ENCODE measurements at regions of chrX and their contacts with region 1.

Region 1: GRCh38 chrX:57918750-57919436 is 8.6 kb upstream of the ZXDA start:
- DNase-seq: peak in 2 of 9 experiments; percentile 39 to 50
- ATAC-seq: no peak
- H3K4me3 ChIP-seq: no peak overlapping the region
- H3K4me3 Mint-ChIP-seq: no peak overlapping the region
- H3K27ac ChIP-seq: no peak overlapping the region
- H3K27ac Mint-ChIP-seq: no peak overlapping the region
- H3K4me1 ChIP-seq: no peaks in the 10 kb centered on the region
- H3K4me1 Mint-ChIP-seq: no peaks in the 10 kb centered on the region
- H3K27me3 ChIP-seq: no peaks in the 10 kb centered on the region
- H3K27me3 Mint-ChIP-seq: no peaks in the 10 kb centered on the region
- CTCF ChIP-seq: peak; percentile 37

Region 2: GRCh38 chrX:56764153-56764974 is 1154.5 kb before region 1 on chrX:
- CTCF ChIA-PET with region 1: interaction called, 4 read pairs
- POLR2A ChIA-PET with region 1: no interaction called
- intact Hi-C with region 1: loop called in 1 of 2 experiments (anchors 5 kb)
- DNase-seq: peak; percentile 37 to 90 (median 62)
- ATAC-seq: peak; percentile 69
- H3K4me3 ChIP-seq: peak overlapping the region in 1 of 2 experiments; percentile 35
- H3K4me3 Mint-ChIP-seq: peak overlapping the region; percentile 70
- H3K27ac ChIP-seq: peak overlapping the region; percentile 37 to 69
- H3K27ac Mint-ChIP-seq: peak overlapping the region; percentile 91
- H3K4me1 ChIP-seq: peaks cover 40% of the 10 kb centered on the region
- H3K4me1 Mint-ChIP-seq: peaks cover 42% of the 10 kb centered on the region
- H3K27me3 ChIP-seq: no peaks in the 10 kb centered on the region
- H3K27me3 Mint-ChIP-seq: no peaks in the 10 kb centered on the region
- CTCF ChIP-seq: peak; percentile 47

Region 3: DNA sequence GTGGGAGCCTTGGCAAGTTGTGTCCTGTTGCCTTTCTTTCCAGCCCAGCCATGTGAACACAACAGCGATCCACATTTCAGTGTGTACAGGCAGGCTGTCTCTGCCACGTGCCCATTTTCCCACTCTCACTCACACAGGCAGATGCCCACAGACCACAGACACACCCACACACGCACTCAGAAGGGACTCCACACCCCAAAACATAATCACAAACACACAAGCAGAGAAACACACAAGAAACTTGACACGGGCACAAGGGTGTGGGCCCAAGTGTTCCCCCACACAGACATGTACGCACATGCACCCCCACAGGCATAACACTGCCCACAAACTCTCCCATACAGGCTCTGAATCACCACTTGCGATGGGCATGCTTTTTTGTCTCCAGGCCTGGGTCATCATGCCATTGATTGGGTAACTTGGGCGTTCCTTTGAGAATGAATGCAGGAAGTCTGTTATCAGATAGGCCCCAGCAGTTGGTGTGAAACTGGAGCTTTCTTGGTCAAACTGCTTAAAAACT is 1105.5 kb before region 1 on chrX:
- CTCF ChIA-PET with region 1: no interaction called
- POLR2A ChIA-PET with region 1: no interaction called
- intact Hi-C with region 1: loop called (anchors 5 kb)
- DNase-seq: peak in 8 of 9 experiments; percentile 27 to 88 (median 59)
- ATAC-seq: peak; percentile 79
- H3K4me3 ChIP-seq: peak overlapping the region; percentile 0 to 12
- H3K4me3 Mint-ChIP-seq: peak overlapping the region; percentile 78
- H3K27ac ChIP-seq: peak overlapping the region; percentile 57 to 90
- H3K27ac Mint-ChIP-seq: peak overlapping the region; percentile 98
- H3K4me1 ChIP-seq: peaks cover 26% of the 10 kb centered on the region
- H3K4me1 Mint-ChIP-seq: peaks cover 43% of the 10 kb centered on the region
- H3K27me3 ChIP-seq: no peaks in the 10 kb centered on the region
- H3K27me3 Mint-ChIP-seq: no peaks in the 10 kb centered on the region
- CTCF ChIP-seq: no peak

Region 4: DNA sequence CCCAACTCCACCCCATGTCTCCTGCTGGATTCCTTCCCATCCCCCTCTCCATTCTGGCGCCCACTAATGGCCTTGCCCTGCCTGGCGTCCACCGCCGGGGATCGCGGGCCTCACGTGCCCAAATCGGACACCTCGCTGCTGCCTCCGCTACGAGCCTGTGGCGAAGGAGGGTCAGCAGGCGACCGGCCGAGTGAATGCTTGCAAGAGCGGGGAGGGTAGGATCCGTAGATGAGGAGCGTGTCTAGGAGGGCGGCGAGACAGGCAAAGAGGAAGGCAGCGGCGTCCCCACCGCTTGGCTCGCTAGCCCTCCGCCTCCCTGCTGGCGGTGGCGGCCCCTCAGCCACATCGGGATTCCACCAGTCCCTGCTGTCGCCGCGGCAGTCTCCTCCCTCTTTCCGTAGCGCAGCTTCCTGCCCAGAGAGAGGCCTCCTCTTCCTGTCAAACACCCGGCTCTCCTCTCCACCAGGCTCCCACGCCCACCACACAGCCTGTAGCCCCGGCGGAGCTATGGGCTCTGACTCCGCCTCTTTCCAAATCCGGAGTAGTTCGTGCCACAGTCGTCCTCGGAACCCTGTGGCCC is 797.6 kb before region 1 on chrX and contains the start of gene SPIN2B:
- CTCF ChIA-PET with region 1: no interaction called
- POLR2A ChIA-PET with region 1: no interaction called
- intact Hi-C with region 1: loop called in 1 of 2 experiments (anchors 5 kb)
- DNase-seq: peak; percentile 43 to 89 (median 75)
- ATAC-seq: peak; percentile 99
- H3K4me3 ChIP-seq: peak within 1 kb of the TSS; percentile 60 to 77
- H3K4me3 Mint-ChIP-seq: peak within 1 kb of the TSS; percentile 94
- H3K27ac ChIP-seq: peak within 1 kb of the TSS; percentile 40 to 53
- H3K27ac Mint-ChIP-seq: peak within 1 kb of the TSS; percentile 89
- H3K4me1 ChIP-seq: peaks cover 4% of the 10 kb centered on the region
- H3K4me1 Mint-ChIP-seq: peaks cover 13% of the 10 kb centered on the region
- H3K27me3 ChIP-seq: no peaks in the 10 kb centered on the region
- H3K27me3 Mint-ChIP-seq: no peaks in the 10 kb centered on the region
- CTCF ChIP-seq: no peak
- total RNA-seq, gene SPIN2B: 8.1 to 8.6 TPM

Region 5: DNA sequence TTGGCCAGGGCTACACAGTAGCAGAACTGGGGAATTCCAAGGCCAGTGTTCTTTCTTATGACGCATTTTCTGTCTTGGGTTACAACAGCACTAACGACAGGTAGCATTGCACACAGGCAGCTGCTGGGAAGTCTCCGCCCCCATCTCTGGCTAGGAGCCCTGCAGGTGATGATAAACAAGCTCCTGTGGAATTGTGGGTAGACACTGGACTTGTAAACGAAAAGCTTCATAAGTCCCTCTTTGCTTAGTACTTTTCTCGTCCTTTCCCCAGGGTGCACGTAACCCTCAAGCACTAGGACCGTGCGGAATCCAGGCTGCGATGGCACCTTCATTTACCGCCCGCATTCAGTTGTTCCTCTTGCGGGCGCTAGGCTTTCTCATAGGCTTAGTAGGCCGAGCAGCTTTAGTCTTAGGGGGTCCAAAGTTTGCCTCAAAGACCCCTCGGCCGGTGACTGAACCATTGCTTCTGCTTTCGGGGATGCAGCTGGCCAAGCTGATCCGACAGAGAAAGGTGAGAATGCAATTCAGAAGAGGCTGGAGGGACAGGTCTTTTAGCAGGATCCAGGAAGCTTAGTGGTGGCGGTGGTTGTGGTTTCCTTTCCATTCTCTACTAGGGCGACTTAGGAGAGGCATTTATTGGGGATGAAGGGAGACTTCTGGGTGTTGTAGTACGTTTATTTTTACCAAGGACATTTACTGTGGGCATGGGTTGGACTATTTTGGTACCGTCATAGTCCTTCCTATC is 632.2 kb before region 1 on chrX and contains the start of gene FAAH2:
- CTCF ChIA-PET with region 1: no interaction called
- POLR2A ChIA-PET with region 1: no interaction called
- intact Hi-C with region 1: loop called in 1 of 2 experiments (anchors 5 kb)
- DNase-seq: peak; percentile 15 to 85 (median 53)
- ATAC-seq: peak; percentile 89
- H3K4me3 ChIP-seq: peak within 1 kb of the TSS; percentile 45 to 61
- H3K4me3 Mint-ChIP-seq: peak within 1 kb of the TSS; percentile 92
- H3K27ac ChIP-seq: peak within 1 kb of the TSS; percentile 19 to 45
- H3K27ac Mint-ChIP-seq: peak within 1 kb of the TSS; percentile 94
- H3K4me1 ChIP-seq: peaks cover 3% of the 10 kb centered on the region
- H3K4me1 Mint-ChIP-seq: peaks cover 29% of the 10 kb centered on the region
- H3K27me3 ChIP-seq: no peaks in the 10 kb centered on the region
- H3K27me3 Mint-ChIP-seq: no peaks in the 10 kb centered on the region
- CTCF ChIP-seq: no peak
- total RNA-seq, gene FAAH2: 2.9 to 3.5 TPM

Region 6: GRCh38 chrX:57573754-57574153 is 345.1 kb before region 1 on chrX:
- CTCF ChIA-PET with region 1: interaction called, 3 read pairs
- POLR2A ChIA-PET with region 1: no interaction called
- intact Hi-C with region 1: loop called in 1 of 2 experiments (anchors 2 kb)
- DNase-seq: peak in 4 of 9 experiments; percentile 8 to 52 (median 26)
- ATAC-seq: no peak
- H3K4me3 ChIP-seq: no peak overlapping the region
- H3K4me3 Mint-ChIP-seq: no peak overlapping the region
- H3K27ac ChIP-seq: no peak overlapping the region
- H3K27ac Mint-ChIP-seq: no peak overlapping the region
- H3K4me1 ChIP-seq: no peaks in the 10 kb centered on the region
- H3K4me1 Mint-ChIP-seq: no peaks in the 10 kb centered on the region
- H3K27me3 ChIP-seq: no peaks in the 10 kb centered on the region
- H3K27me3 Mint-ChIP-seq: no peaks in the 10 kb centered on the region
- CTCF ChIP-seq: no peak

Region 7: DNA sequence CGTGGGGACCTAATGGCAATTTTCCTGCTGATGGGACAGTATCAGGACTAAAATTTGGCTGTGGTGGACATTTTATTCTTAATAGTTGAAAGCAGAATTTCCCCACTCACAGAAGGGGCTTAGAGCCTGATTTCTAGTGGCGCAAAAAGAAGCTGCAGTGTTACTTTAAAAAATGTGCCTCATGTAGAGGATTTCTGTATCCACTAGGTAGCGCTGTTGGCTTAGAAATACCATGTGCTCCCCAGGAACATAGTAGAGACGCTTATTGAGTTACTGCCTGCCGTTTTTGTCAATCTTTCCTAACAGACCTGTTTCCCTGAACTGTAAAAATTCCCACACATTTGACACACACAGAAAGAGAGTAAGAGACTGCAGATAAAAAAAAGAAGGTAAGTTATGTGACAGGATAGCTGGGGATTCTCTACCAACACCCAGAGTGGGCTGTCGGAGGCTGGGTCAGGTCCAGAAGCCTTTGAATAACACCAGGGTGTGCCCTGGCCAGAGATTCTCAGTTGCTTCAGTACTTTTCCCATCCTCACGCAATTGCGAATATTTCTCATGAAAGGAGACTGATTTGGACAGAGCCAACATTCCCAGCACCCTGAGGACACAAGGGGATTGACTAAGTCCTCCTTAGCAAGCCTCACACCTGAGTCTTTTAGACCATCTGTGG is 97.1 kb before region 1 on chrX:
- CTCF ChIA-PET with region 1: interaction called, 4 read pairs
- POLR2A ChIA-PET with region 1: no interaction called
- intact Hi-C with region 1: loop called (anchors 1 kb)
- DNase-seq: peak in 6 of 9 experiments; percentile 0 to 69 (median 18)
- ATAC-seq: peak; percentile 48
- H3K4me3 ChIP-seq: no peak overlapping the region
- H3K4me3 Mint-ChIP-seq: peak overlapping the region; percentile 16
- H3K27ac ChIP-seq: no peak overlapping the region
- H3K27ac Mint-ChIP-seq: no peak overlapping the region
- H3K4me1 ChIP-seq: no peaks in the 10 kb centered on the region
- H3K4me1 Mint-ChIP-seq: peaks cover 2% of the 10 kb centered on the region
- H3K27me3 ChIP-seq: no peaks in the 10 kb centered on the region
- H3K27me3 Mint-ChIP-seq: peaks cover 3% of the 10 kb centered on the region
- CTCF ChIP-seq: peak; percentile 58